Sigmoid colon (tissue), 7 donors: ENCODE measurements at regions of chr19 and their contacts with region 1.

Region 1: DNA sequence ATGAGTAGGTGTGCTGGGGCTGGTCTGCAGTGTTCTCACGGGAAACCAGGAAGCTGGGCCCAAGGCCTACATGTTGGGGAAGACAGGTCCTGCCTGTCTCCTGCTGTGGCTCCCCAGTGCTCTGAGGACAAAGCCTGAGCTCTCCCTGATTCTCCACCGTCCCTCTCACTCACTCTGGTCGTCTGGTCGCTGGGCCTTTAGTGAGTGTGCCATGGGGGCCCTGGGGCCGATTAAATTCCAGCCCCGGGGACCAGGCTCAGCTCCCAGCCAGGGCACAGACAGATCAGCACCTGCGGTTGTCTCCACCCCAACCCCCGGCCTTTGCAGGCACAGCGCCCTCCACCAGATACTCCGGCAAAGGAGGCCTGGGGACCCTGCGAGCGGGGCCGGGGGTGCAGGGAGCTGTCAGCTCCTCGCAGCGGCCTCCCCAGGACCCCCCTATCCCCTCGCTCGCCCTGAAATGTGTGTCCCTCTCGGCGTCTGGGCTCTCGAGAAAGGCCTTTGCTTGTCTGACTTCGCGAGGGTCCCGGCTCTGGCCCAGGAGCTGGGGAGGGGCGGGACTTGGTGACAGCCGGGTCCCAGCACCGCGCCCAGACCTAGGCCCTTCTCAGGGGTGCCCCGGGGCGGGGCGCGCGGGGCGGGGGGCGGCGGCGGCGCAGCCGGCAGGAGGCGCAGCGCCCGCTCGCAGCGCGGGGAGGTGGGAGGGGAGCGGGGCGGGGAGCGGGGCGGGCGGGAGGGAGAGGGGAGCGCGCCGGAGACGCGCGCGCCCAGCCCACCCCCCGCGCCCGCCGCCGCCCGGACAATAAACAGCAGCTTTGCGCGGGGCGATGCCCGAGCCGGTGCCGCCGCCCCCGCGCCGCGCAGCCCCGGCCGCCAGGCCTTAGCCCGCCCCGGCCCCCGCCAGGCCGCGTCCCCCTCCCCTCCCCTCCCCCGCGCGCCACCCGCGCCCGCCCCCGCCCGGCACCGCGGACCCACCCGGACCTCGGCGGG is at the start of gene PALM:
- DNase-seq: peak; percentile 74
- H3K4me3 ChIP-seq: peak within 1 kb of the TSS; percentile 68 to 95 (median 84)
- H3K27ac ChIP-seq: peak within 1 kb of the TSS; percentile 81 to 83 (median 82)
- H3K4me1 ChIP-seq: peaks cover 0 to 41% (median 27%) of the 10 kb centered on the region in 4 donors
- H3K27me3 ChIP-seq: peaks cover 0 to 12% (median 6%) of the 10 kb centered on the region in 3 donors
- CTCF ChIP-seq: peak in 1 of 4 experiments; percentile 20
- EP300 ChIP-seq: no peak
- POLR2A ChIP-seq: no peak
- total RNA-seq, gene PALM: 30.4 to 91.4 (median 35.9) TPM

Region 2: DNA sequence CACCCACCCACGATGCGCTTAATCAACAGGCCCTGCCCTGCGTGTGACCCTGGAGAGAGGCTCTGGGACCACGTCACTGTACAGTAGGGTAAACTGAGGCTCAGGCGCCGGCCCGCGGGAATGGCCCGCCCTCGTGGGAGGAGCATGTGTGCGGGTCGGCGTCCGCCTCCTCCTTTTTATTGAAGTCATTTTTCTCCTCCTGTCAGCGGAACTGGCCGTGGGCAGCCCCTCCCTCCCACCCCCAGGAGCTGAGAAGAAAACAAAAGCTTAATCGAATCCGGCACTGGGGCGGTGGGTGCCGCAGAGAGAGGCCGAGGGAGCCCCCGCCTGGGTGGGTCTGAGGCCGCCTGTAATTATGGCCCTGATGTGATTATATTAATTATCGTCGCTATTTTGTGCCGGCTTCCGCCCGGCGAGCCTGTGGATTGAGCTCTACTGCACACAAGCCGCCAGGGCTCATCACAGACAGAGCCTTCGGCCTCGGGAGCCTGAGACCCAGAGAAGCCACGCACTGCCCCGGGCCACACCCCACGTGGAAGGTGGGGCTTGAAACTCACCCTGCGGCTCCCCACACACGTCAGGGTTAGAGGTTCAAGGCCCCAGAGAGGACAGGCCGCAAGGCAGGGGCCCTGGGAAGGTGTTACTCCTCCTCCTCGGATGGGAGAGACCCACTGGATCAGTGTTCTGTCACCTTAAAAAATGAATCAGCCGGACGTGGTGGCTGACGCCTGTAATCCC is 306.4 kb before region 1 on chr19:
- intact Hi-C with region 1: no loop called
- DNase-seq: no peak
- H3K4me3 ChIP-seq: peak overlapping the region in 2 of 4 donors; percentile 25 to 35
- H3K27ac ChIP-seq: no peak overlapping the region
- H3K4me1 ChIP-seq: peaks cover 0 to 7% (median 0%) of the 10 kb centered on the region in 4 donors
- H3K27me3 ChIP-seq: peaks cover 8 to 73% (median 44%) of the 10 kb centered on the region in 3 donors
- CTCF ChIP-seq: no peak
- EP300 ChIP-seq: no peak
- POLR2A ChIP-seq: no peak

Region 3: GRCh38 chr19:680287-681028 is 28.0 kb before region 1 on chr19:
- intact Hi-C with region 1: loop called (anchors 2 kb)
- DNase-seq: peak; percentile 100
- H3K4me3 ChIP-seq: peak overlapping the region; percentile 67 to 96 (median 84)
- H3K27ac ChIP-seq: peak overlapping the region; percentile 97 to 100 (median 98)
- H3K4me1 ChIP-seq: peaks cover 0 to 47% (median 41%) of the 10 kb centered on the region in 4 donors
- H3K27me3 ChIP-seq: no peaks in the 10 kb centered on the region
- CTCF ChIP-seq: peak in 1 of 4 experiments; percentile 43
- EP300 ChIP-seq: peak in 1 of 4 donors; percentile 62
- POLR2A ChIP-seq: no peak

Region 4: GRCh38 chr19:719636-720344 is 11.3 kb after region 1 on chr19:
- intact Hi-C with region 1: no loop called
- DNase-seq: no peak
- H3K4me3 ChIP-seq: peak overlapping the region in 2 of 4 donors; percentile 5 to 18
- H3K27ac ChIP-seq: peak overlapping the region; percentile 52 to 75 (median 61)
- H3K4me1 ChIP-seq: peaks cover 0 to 28% (median 18%) of the 10 kb centered on the region in 4 donors
- H3K27me3 ChIP-seq: peaks cover 4 to 31% (median 6%) of the 10 kb centered on the region in 3 donors
- CTCF ChIP-seq: no peak
- EP300 ChIP-seq: no peak
- POLR2A ChIP-seq: no peak

Region 5: GRCh38 chr19:732148-733069 is 24.0 kb after region 1 on chr19:
- intact Hi-C with region 1: loop called (anchors 2 kb)
- DNase-seq: no peak
- H3K4me3 ChIP-seq: no peak overlapping the region
- H3K27ac ChIP-seq: no peak overlapping the region
- H3K4me1 ChIP-seq: no peaks in the 10 kb centered on the region
- H3K27me3 ChIP-seq: no peaks in the 10 kb centered on the region
- CTCF ChIP-seq: no peak
- EP300 ChIP-seq: no peak
- POLR2A ChIP-seq: no peak